ENCODE measurements at regions of chr17 and their contacts with region 1.

Region 1: DNA sequence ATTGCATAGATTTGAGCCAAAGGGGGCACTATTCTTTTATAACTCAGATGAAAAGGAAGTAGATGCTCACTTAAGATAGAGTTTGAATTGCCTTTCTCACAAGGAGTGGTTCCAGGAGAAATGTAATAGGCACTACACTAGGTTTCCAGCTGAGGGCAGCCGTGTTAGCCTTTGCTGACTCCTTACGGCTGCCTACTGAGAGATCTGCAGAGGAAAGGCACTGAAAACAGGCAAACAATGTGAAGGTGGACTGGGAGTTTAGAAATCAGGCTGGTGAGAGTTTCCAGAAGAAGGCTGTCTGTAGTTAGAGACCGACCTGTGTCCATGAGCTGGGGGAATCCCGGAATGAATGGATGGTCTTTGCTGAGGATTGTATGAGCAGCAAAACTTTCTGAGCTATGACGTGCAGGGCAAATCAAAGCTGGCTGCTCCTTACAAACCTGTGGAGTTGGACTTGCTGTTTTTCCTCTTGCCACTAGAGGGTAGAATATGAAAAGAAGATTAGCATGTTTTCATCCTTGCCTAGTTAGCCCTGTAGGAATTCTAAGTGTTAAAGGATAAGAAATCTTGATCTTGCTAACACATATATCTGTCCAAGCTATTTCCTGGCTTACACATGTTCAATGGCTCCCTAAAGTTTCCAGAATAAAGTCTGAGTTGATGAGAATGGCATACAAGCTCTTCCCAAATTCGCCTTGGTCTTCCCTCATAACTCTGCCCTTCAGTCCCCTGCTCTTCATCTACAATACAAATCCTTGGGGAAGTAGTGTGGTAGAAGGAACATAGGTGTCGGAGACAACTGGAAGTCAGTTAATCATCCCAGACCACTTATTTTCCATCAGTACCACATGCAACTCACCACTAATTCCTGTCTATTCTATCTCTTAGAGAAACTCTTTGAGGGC is 20.1 kb upstream of the TAOK1 start:
- DNase-seq: peak; percentile 82
- H3K4me3 Mint-ChIP-seq: no peak overlapping the region
- H3K27ac Mint-ChIP-seq: no peak overlapping the region
- H3K4me1 Mint-ChIP-seq: no peaks in the 10 kb centered on the region
- H3K27me3 Mint-ChIP-seq: no peaks in the 10 kb centered on the region
- CTCF ChIP-seq: peak; percentile 47

Region 2: DNA sequence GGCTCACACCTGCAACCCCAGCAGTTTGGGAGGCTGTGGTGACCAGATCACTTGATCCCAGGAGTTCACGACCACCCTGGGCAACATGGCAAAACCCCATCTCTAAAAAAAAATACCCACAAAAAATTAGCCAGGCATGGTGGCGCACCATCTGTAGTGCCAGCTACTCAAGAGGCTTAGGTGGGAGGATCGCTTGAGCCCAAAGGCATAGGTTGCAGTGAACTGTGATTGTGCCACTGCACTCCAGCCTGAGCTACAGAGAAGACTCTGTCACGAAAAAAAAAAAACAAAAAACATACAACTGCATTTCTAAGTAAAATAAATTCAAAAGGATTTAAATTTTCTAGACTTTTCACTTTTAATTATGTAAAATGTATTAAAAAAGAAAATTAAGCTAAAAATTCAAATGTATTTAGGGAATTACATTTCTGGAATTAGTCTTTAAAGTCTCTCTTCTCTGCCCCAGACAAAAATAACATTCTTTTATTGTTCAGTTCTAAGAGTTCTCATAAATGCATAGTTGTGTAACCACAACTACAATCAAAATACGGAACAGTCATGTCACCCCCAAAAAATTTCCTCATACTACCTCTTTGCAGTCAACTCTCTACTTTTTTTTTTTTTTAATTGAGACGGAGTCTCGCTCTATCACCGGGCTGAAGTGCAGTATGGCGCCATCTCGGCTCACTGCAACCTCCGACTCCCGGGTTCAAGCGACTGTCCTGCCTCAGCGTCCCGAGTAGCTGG is 541.6 kb before region 1 on chr17:
- CTCF ChIA-PET with region 1: no interaction called
- POLR2A ChIA-PET with region 1: no interaction called
- intact Hi-C with region 1: no loop called
- DNase-seq: peak; percentile 22
- H3K4me3 Mint-ChIP-seq: no peak overlapping the region
- H3K27ac Mint-ChIP-seq: peak overlapping the region; percentile 32
- H3K4me1 Mint-ChIP-seq: peaks cover 9% of the 10 kb centered on the region
- H3K27me3 Mint-ChIP-seq: no peaks in the 10 kb centered on the region
- CTCF ChIP-seq: no peak

Region 3: DNA sequence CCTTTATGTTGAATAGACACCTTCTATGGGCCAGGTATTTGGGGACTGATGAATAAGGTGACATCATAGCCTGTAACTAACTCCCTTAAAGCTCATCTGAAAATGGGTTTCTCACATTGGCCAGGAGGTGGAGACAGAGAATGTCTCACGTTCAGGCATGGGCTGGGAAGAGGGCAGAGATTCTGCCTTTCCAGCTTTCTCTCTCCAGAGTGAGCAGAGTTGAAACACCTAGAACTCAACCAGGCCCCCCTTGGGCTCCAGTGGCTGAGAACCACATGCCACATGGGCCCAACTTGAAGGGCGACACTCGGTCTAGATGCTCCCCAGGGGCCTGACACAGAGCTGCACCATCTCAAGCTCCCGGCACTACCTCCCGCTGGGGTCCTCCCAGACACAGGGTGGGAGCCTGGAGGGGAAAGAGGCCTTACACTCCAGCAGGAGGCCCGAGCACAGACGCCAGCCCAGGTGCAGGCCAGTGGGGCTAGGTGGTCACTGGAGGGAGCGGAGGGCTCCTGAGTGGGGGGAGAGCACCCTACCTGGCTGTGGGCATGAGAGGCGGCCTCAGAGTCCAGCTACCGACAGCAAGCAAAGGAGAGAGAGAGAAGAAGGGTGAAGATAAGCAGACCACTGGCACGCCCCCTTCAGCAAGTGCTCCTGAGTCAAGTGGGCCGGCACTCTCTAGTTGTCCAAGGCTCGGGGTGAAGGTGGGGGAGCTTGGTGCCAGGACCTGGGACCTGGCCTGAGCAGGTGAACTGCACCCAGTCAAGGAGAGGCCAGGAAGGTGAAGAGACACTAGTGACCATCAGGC is 245.8 kb before region 1 on chr17:
- CTCF ChIA-PET with region 1: interaction called, 11 read pairs
- POLR2A ChIA-PET with region 1: no interaction called
- intact Hi-C with region 1: loop called (anchors 1 kb)
- DNase-seq: peak; percentile 83
- H3K4me3 Mint-ChIP-seq: no peak overlapping the region
- H3K27ac Mint-ChIP-seq: peak overlapping the region; percentile 82
- H3K4me1 Mint-ChIP-seq: peaks cover 13% of the 10 kb centered on the region
- H3K27me3 Mint-ChIP-seq: no peaks in the 10 kb centered on the region
- CTCF ChIP-seq: peak; percentile 77

Region 4: DNA sequence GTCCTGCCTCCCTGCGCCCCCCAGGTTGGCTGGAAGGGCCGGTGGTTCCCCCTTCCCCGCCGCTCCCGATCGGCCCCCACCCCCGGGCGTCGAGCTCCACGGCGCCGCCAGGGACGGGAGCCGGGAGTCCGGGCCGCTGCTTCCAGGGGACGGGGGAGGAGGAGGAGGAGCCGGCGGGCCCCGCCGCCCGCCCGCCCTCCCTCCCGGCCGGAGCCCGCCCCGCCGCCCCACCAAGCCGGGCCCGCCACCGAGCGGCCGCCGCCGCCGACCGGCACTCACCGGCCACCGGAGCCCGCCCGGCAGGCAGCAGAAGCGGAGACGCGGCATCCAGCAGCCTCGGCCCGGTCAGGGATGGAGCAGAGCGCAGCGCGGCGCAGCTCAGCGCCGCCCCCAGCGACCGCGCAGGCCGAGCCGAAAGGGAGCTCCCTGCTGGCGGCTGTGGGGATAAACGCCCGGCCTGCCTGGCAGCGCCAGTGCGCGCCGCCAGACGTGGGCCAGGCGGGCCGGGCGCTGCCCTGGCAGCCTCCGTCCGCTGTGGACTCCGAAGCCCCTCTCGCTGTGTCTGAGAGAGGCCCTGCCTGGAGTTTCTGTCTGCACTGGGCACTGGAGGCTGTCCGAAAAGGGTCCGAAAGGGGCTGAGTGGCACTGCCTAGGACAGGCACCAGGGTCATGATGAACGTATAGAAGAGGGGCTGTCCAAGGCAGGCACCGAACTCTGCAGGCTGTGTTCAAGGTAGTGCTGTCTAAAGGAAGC is 189.9 kb before region 1 on chr17 and contains the start of gene MYO18A:
- CTCF ChIA-PET with region 1: no interaction called
- POLR2A ChIA-PET with region 1: no interaction called
- intact Hi-C with region 1: no loop called
- DNase-seq: peak; percentile 76
- H3K4me3 Mint-ChIP-seq: peak within 1 kb of the TSS; percentile 81
- H3K27ac Mint-ChIP-seq: peak within 1 kb of the TSS; percentile 93
- H3K4me1 Mint-ChIP-seq: peaks cover 34% of the 10 kb centered on the region
- H3K27me3 Mint-ChIP-seq: no peaks in the 10 kb centered on the region
- CTCF ChIP-seq: peak; percentile 76
- total RNA-seq, gene MYO18A: 24.0 and 24.8 TPM in 2 replicates

Region 5: DNA sequence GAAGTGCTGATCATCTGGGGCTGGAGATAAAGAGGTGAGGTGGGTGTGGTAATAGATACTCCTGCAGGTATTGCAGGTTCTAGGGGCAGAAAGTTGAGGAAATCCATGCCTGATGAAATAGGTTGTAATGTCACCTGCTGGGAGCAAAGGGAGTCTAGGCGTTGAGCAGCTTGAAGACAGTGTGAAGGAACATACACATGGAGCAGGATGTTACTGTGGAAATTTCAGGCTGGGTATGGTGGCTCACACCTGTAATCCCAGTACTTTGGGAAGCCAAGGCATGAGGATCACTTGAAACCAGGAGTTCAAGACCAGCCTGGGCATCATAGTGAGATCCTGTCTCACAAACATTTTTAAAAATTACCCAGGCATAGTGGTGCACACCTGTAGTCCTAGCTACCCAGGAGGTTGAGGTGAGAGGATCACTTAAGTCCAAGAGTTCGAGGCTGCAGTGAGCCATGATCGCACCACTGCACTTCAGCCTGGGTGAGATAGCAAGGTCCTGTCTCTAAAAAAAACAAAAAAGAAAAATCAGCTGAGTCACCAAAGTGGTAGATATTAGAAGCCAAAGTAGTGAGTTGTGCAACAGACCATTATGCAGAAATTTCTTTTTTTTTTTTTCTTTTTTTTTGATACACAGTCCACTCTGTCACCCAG is 132.5 kb before region 1 on chr17:
- CTCF ChIA-PET with region 1: no interaction called
- POLR2A ChIA-PET with region 1: no interaction called
- intact Hi-C with region 1: no loop called
- DNase-seq: peak; percentile 63
- H3K4me3 Mint-ChIP-seq: no peak overlapping the region
- H3K27ac Mint-ChIP-seq: peak overlapping the region; percentile 88
- H3K4me1 Mint-ChIP-seq: peaks cover 32% of the 10 kb centered on the region
- H3K27me3 Mint-ChIP-seq: no peaks in the 10 kb centered on the region
- CTCF ChIP-seq: no peak

Region 6: DNA sequence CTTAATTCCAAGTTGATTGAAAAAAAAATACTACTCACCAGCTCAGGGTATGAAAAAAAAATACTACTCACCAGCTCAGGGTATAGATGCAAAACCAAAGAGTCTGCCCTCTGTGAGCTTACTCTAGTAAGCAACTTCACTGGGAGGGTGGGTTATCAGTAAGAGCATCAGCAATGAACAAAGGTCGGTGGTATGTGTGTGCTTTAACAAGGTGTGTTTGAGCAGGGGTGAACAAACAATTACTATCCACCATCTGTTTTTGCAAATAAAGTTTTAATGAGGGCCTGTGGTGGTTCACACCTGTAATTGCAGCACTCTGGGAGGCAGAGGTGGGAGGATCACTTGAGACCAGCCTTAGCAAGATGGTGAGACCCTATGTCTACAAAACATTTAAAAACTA is 96.2 kb before region 1 on chr17:
- CTCF ChIA-PET with region 1: no interaction called
- POLR2A ChIA-PET with region 1: no interaction called
- intact Hi-C with region 1: no loop called
- DNase-seq: no peak
- H3K4me3 Mint-ChIP-seq: no peak overlapping the region
- H3K27ac Mint-ChIP-seq: no peak overlapping the region
- H3K4me1 Mint-ChIP-seq: peaks cover 12% of the 10 kb centered on the region
- H3K27me3 Mint-ChIP-seq: no peaks in the 10 kb centered on the region
- CTCF ChIP-seq: no peak

Region 7: GRCh38 chr17:29347831-29348629 is 22.1 kb before region 1 on chr17:
- CTCF ChIA-PET with region 1: interaction called, 10 read pairs
- POLR2A ChIA-PET with region 1: no interaction called
- intact Hi-C with region 1: no loop called
- DNase-seq: peak; percentile 45
- H3K4me3 Mint-ChIP-seq: no peak overlapping the region
- H3K27ac Mint-ChIP-seq: no peak overlapping the region
- H3K4me1 Mint-ChIP-seq: peaks cover 4% of the 10 kb centered on the region
- H3K27me3 Mint-ChIP-seq: peaks cover 26% of the 10 kb centered on the region
- CTCF ChIP-seq: no peak

Region 8: GRCh38 chr17:29389982-29390850 is 20.1 kb after region 1 on chr17 and contains the start of gene TAOK1:
- CTCF ChIA-PET with region 1: interaction called, 13 read pairs
- POLR2A ChIA-PET with region 1: interaction called, 8 read pairs
- intact Hi-C with region 1: no loop called
- DNase-seq: peak; percentile 98
- H3K4me3 Mint-ChIP-seq: peak within 1 kb of the TSS; percentile 96
- H3K27ac Mint-ChIP-seq: peak within 1 kb of the TSS; percentile 94
- H3K4me1 Mint-ChIP-seq: peaks cover 30% of the 10 kb centered on the region
- H3K27me3 Mint-ChIP-seq: no peaks in the 10 kb centered on the region
- CTCF ChIP-seq: no peak
- total RNA-seq, gene TAOK1: 68.7 and 84.2 TPM in 2 replicates

Region 9: GRCh38 chr17:29524460-29525091 is 154.5 kb after region 1 on chr17:
- CTCF ChIA-PET with region 1: interaction called, 12 read pairs
- POLR2A ChIA-PET with region 1: interaction called, 3 read pairs
- intact Hi-C with region 1: no loop called
- DNase-seq: no peak
- H3K4me3 Mint-ChIP-seq: no peak overlapping the region
- H3K27ac Mint-ChIP-seq: no peak overlapping the region
- H3K4me1 Mint-ChIP-seq: no peaks in the 10 kb centered on the region
- H3K27me3 Mint-ChIP-seq: no peaks in the 10 kb centered on the region
- CTCF ChIP-seq: no peak

Region 10: GRCh38 chr17:29546085-29546484 is 176.0 kb after region 1 on chr17:
- CTCF ChIA-PET with region 1: interaction called, 10 read pairs
- POLR2A ChIA-PET with region 1: no interaction called
- intact Hi-C with region 1: no loop called
- DNase-seq: no peak
- H3K4me3 Mint-ChIP-seq: no peak overlapping the region
- H3K27ac Mint-ChIP-seq: no peak overlapping the region
- H3K4me1 Mint-ChIP-seq: peaks cover 6% of the 10 kb centered on the region
- H3K27me3 Mint-ChIP-seq: no peaks in the 10 kb centered on the region
- CTCF ChIP-seq: no peak

Region 11: DNA sequence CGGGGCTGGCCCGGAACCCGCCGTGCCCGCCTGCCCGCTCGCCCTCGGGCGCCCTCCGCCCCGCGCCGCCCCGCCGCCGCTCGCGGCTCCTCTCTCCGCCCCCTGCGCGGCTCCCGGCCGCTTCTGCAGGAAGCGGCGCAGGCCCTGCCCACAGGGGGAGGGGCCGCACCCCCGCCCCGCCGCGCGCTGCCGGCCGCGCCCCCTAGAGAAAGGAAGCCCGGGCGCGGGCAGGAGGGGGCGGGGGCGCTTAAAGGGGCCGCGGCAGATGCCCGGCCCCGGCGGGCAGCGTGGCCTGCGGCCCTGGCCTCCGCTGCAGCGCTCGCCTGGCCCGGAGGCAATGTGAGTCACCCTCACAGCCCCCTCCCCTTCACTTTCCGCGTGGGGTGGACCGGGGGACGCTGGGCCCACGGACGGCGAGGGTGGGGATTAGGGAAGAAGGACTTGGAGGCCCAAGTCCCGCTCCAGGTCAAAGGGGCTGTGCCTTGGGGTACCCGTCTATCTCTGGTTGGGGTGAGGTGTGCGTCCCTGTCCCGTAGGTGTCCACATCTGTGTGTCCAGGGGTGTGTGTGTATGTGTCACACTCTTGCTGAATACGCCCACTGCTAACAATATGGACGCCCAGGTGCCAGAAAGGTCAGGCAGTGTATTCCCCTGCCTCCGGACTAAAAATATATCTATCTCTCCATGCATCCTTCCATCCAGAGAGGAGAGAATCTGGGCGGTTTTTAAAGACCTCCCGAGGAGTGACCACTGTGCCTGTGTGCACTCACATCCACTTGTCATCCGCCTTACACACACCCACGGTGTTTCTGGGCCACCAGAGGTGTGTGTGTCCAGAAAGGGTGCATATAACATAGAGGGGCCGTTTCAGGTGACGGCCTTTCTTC is 219.7 kb after region 1 on chr17 and contains the start of gene GIT1:
- CTCF ChIA-PET with region 1: interaction called, 24 read pairs
- POLR2A ChIA-PET with region 1: interaction called, 14 read pairs
- intact Hi-C with region 1: loop called (anchors 2 kb)
- DNase-seq: peak; percentile 83
- H3K4me3 Mint-ChIP-seq: peak within 1 kb of the TSS; percentile 83
- H3K27ac Mint-ChIP-seq: peak within 1 kb of the TSS; percentile 82
- H3K4me1 Mint-ChIP-seq: peaks cover 23% of the 10 kb centered on the region
- H3K27me3 Mint-ChIP-seq: no peaks in the 10 kb centered on the region
- CTCF ChIP-seq: no peak
- total RNA-seq, gene GIT1: 49.0 and 52.6 TPM in 2 replicates